Natural killer cell (primary cell): ENCODE measurements at regions of chr4 and their contacts with region 1.

Region 1: GRCh38 chr4:99949034-99949998 is 759 bp downstream of the H2AZ1 start:
- DNase-seq: peak; percentile 72 to 95
- ATAC-seq: peak; percentile 26 to 59 (median 35)
- H3K4me3 ChIP-seq: peak overlapping the region; percentile 100
- H3K4me3 Mint-ChIP-seq: no peak overlapping the region
- H3K27ac ChIP-seq: peak overlapping the region; percentile 91
- H3K27ac Mint-ChIP-seq: no peak overlapping the region
- H3K4me1 ChIP-seq: peaks cover 20% of the 10 kb centered on the region
- H3K4me1 Mint-ChIP-seq: peaks cover 25 to 32% of the 10 kb centered on the region in 2 donors
- H3K27me3 ChIP-seq: no peaks in the 10 kb centered on the region
- H3K27me3 Mint-ChIP-seq: no peaks in the 10 kb centered on the region
- CTCF ChIP-seq: peak; percentile 81

Region 2: DNA sequence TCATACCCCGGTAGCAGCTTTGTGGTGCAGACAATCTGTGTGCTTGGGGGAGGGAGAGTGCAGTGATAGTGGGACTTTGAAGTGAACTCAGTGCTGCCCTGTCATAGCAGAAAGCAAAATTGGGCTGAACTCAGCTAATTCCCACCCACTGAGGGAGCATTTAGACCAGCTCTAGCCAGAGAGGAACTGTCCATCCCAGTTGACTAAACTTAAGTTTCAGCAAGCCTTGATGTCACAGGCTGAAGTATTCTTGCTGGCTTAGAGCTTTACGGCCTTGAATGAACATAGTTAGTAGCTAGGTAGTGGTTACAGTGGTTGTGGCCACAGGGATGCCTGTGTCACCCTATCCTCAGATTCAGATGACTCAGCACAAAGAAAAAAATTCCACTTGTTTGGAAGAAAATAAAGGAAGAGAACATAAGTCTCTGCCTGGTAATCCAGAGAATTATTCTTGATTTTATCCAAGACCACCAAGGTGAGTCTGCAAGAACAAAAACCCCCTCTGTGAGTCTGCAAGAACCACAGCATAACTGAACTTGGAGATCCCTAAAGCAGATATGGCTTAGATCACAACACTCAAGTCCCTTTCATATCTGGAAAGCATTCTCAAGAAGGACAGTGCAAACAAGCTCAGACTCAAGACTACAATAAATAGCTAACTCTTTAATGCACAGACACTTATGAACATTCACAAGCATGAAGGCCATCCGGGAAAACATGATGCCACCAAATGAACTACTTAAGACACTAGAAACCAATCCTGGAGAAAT is 553.5 kb before region 1 on chr4:
- intact Hi-C with region 1: no loop called
- DNase-seq: no peak
- ATAC-seq: no peak
- H3K4me3 ChIP-seq: no peak overlapping the region
- H3K4me3 Mint-ChIP-seq: no peak overlapping the region
- H3K27ac ChIP-seq: no peak overlapping the region
- H3K27ac Mint-ChIP-seq: no peak overlapping the region
- H3K4me1 ChIP-seq: no peaks in the 10 kb centered on the region
- H3K4me1 Mint-ChIP-seq: no peaks in the 10 kb centered on the region
- H3K27me3 ChIP-seq: no peaks in the 10 kb centered on the region
- H3K27me3 Mint-ChIP-seq: peaks cover 4 to 25% of the 10 kb centered on the region in 2 donors
- CTCF ChIP-seq: no peak

Region 3: GRCh38 chr4:99808260-99808857 is 141.0 kb before region 1 on chr4:
- intact Hi-C with region 1: loop called (anchors 1 kb)
- DNase-seq: peak in 1 of 2 donors; percentile 82
- ATAC-seq: peak; percentile 66 to 88 (median 78)
- H3K4me3 ChIP-seq: no peak overlapping the region
- H3K4me3 Mint-ChIP-seq: no peak overlapping the region
- H3K27ac ChIP-seq: no peak overlapping the region
- H3K27ac Mint-ChIP-seq: no peak overlapping the region
- H3K4me1 ChIP-seq: no peaks in the 10 kb centered on the region
- H3K4me1 Mint-ChIP-seq: no peaks in the 10 kb centered on the region
- H3K27me3 ChIP-seq: peaks cover 2% of the 10 kb centered on the region
- H3K27me3 Mint-ChIP-seq: peaks cover 7 to 43% of the 10 kb centered on the region in 2 donors
- CTCF ChIP-seq: peak; percentile 66

Region 4: DNA sequence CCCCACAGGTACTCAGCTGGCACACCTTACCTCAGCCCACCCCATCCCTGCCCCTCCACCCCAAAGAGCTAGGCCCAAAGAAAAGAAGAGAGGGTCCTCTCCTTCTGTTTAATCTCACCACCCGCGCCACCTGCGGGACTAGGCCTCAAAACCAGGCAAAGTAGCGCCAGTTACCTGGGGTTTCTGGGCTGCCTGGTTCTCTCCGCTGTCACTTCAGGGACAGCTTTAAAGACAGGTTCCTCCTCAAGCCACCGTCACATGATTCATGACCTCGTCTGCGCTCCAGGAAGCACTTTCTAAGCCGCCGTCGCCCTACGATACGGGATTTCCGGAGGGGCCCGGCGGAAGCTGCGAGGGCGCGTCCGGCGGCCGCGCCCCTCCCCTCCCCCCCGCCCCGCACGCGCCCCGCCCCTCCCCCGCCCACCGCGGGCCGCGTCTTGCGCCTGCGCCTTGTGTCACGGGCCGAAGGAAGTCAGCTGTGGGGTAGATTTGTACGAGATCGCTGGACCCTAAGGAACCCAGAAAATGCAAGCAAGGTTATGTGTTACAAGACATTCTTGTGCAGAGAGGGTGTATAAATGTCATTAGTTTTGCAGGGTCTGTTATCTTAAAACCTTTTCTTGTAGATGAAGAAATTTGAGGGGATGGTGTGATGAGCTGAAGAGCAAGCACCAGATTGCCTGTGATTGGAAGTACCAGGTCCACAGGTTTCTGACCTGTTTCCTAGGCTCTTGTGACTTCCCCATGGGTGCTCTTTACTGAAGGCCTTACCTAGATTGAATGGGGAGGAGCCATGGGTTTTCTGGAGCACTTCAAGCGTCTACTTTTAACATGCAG is 54.9 kb before region 1 on chr4 and contains the start of gene LAMTOR3:
- intact Hi-C with region 1: loop called (anchors 1 kb)
- DNase-seq: peak; percentile 80 to 96
- ATAC-seq: peak; percentile 96 to 99 (median 98)
- H3K4me3 ChIP-seq: peak within 1 kb of the TSS; percentile 69
- H3K4me3 Mint-ChIP-seq: peak within 1 kb of the TSS; percentile 86
- H3K27ac ChIP-seq: peak within 1 kb of the TSS; percentile 82
- H3K27ac Mint-ChIP-seq: peak within 1 kb of the TSS; percentile 81 to 95
- H3K4me1 ChIP-seq: peaks cover 20% of the 10 kb centered on the region
- H3K4me1 Mint-ChIP-seq: peaks cover 32 to 34% of the 10 kb centered on the region in 2 donors
- H3K27me3 ChIP-seq: no peaks in the 10 kb centered on the region
- H3K27me3 Mint-ChIP-seq: no peaks in the 10 kb centered on the region
- CTCF ChIP-seq: no peak
- total RNA-seq, gene LAMTOR3: 18.1 to 29.9 (median 25.9) TPM

Region 5: DNA sequence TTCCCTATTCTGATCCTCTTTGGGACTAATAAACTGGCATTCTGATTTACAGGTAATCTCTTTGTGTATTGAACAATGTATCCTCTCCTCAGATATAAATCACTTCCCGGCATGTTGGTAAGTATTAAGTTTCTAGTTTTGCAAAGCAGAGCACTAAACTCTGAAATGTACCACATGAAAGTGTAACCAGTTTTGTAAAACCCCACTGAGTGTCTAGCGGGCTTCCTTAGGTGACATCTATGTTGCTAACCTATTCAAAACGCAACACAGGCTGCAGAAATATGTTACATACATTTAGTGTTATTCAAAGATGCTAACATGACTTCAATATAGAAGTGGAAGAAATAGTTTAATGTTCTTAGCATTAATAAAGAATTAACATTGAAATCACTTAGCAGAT is 28.1 kb before region 1 on chr4:
- intact Hi-C with region 1: no loop called
- DNase-seq: peak in 1 of 2 donors; percentile 48
- ATAC-seq: no peak
- H3K4me3 ChIP-seq: no peak overlapping the region
- H3K4me3 Mint-ChIP-seq: no peak overlapping the region
- H3K27ac ChIP-seq: no peak overlapping the region
- H3K27ac Mint-ChIP-seq: peak overlapping the region in 1 of 2 donors; percentile 49
- H3K4me1 ChIP-seq: peaks cover under 1% of the 10 kb centered on the region
- H3K4me1 Mint-ChIP-seq: peaks cover 13 to 22% of the 10 kb centered on the region in 2 donors
- H3K27me3 ChIP-seq: no peaks in the 10 kb centered on the region
- H3K27me3 Mint-ChIP-seq: no peaks in the 10 kb centered on the region
- CTCF ChIP-seq: no peak

Region 6: GRCh38 chr4:100240008-100240407 is 290.7 kb after region 1 on chr4:
- intact Hi-C with region 1: no loop called
- DNase-seq: no peak
- ATAC-seq: no peak
- H3K4me3 ChIP-seq: no peak overlapping the region
- H3K4me3 Mint-ChIP-seq: no peak overlapping the region
- H3K27ac ChIP-seq: no peak overlapping the region
- H3K27ac Mint-ChIP-seq: no peak overlapping the region
- H3K4me1 ChIP-seq: no peaks in the 10 kb centered on the region
- H3K4me1 Mint-ChIP-seq: peaks cover 0 to 6% of the 10 kb centered on the region in 2 donors
- H3K27me3 ChIP-seq: no peaks in the 10 kb centered on the region
- H3K27me3 Mint-ChIP-seq: peaks cover 0 to 10% of the 10 kb centered on the region in 2 donors
- CTCF ChIP-seq: no peak

Region 7: DNA sequence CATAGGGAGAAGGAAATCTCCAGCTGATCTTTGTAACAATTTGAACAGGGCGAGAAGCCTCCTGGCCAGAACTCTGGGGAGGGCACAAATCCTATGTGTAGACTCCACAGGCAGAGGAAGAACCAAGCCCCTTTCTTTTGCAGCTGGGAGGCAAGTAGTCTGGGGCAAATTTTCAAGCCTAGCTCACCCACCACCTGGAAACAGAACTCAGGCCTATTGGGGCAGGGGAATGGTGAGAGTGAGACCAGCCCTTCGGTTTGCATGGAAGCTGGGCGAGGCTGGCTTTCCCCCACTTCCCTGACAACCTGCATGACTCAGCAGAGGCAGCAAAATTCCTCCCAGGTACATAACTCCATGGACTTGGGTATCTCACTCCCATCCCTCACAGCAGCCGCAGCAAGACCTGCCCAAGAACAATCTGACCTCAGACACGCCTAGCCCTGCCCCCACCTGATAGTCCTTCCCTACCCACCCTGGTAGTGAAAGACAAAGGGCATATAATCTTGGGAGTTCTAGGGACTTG is 430.3 kb after region 1 on chr4:
- intact Hi-C with region 1: no loop called
- DNase-seq: no peak
- ATAC-seq: no peak
- H3K4me3 ChIP-seq: no peak overlapping the region
- H3K4me3 Mint-ChIP-seq: no peak overlapping the region
- H3K27ac ChIP-seq: no peak overlapping the region
- H3K27ac Mint-ChIP-seq: no peak overlapping the region
- H3K4me1 ChIP-seq: no peaks in the 10 kb centered on the region
- H3K4me1 Mint-ChIP-seq: no peaks in the 10 kb centered on the region
- H3K27me3 ChIP-seq: no peaks in the 10 kb centered on the region
- H3K27me3 Mint-ChIP-seq: peaks cover 2 to 9% of the 10 kb centered on the region in 2 donors
- CTCF ChIP-seq: no peak